Activated T-helper 2 cell treated with anti-CD3 and anti-CD28 coated beads, Interferon-gamma antibody, Interleukin-2, Interleukin-4, amounts not matched to agents 10 μg/mL and 5 μg/mL and 100 μg/mL, durations not matched to agents 14 hours and 24 hours and 36 hours (primary cell): ENCODE measurements at regions of chr9 and their contacts with region 1.

Region 1: GRCh38 chr9:21965401-21965951 is 28.7 kb downstream of the CDKN2A start:
- DNase-seq: peak; percentile 44
- H3K4me3 Mint-ChIP-seq: peak overlapping the region; percentile 63
- H3K27ac Mint-ChIP-seq: no peak overlapping the region
- H3K4me1 Mint-ChIP-seq: peaks cover 25% of the 10 kb centered on the region
- H3K27me3 Mint-ChIP-seq: peaks cover 87% of the 10 kb centered on the region

Region 2: GRCh38 chr9:22238809-22239684 is 273.6 kb after region 1 on chr9:
- intact Hi-C with region 1: loop called (anchors 1 kb)
- DNase-seq: no peak
- H3K4me3 Mint-ChIP-seq: no peak overlapping the region
- H3K27ac Mint-ChIP-seq: no peak overlapping the region
- H3K4me1 Mint-ChIP-seq: peaks cover 52% of the 10 kb centered on the region
- H3K27me3 Mint-ChIP-seq: peaks cover 41% of the 10 kb centered on the region

Region 3: GRCh38 chr9:22446950-22447617 is 481.6 kb after region 1 on chr9:
- intact Hi-C with region 1: loop called (anchors 5 kb)
- DNase-seq: no peak
- H3K4me3 Mint-ChIP-seq: no peak overlapping the region
- H3K27ac Mint-ChIP-seq: no peak overlapping the region
- H3K4me1 Mint-ChIP-seq: peaks cover 8% of the 10 kb centered on the region
- H3K27me3 Mint-ChIP-seq: peaks cover 46% of the 10 kb centered on the region